Activated B cell treated with CpG ODN at 0.5 μM for 24 hours (primary cell): ENCODE measurements at regions of chr10 and their contacts with region 1.

Region 1: GRCh38 chr10:123132576-123133477 is 2.9 kb upstream of the HMX3 start:
- DNase-seq: peak; percentile 65
- ATAC-seq: peak; percentile 76
- H3K4me3 Mint-ChIP-seq: peak overlapping the region; percentile 66
- H3K27ac Mint-ChIP-seq: peak overlapping the region; percentile 71
- H3K4me1 Mint-ChIP-seq: peaks cover 34% of the 10 kb centered on the region
- H3K27me3 Mint-ChIP-seq: peaks cover 69% of the 10 kb centered on the region
- CTCF ChIP-seq: peak; percentile 26

Region 2: DNA sequence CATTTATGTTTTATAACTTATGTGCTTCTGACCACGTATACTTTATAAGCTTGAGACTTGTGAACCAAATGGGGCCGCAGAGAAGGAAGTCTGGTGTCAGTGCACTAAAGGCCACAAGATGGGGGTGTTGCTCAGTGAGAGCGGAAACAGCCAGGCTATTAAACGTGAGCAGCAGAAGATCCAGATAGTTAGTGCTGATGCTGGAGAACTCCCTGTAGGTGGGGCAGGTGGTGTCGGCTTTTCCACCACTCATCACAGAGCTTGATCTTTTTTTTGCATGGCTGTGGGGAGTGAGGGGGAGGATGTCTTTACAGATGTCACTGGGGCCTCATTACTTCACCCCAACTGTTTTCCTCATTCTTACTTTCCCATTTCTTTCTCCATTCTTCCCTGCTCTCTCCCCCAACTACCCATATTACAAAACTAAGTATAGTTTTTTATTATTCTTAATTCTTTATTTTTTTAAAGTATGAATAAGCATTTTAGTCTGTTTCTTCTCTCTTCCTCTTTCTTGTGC is 89.4 kb before region 1 on chr10:
- CTCF ChIA-PET with region 1: interaction called, 3 read pairs
- POLR2A ChIA-PET with region 1: no interaction called
- intact Hi-C with region 1: loop called (anchors 1 kb)
- DNase-seq: peak; percentile 16
- ATAC-seq: peak; percentile 69
- H3K4me3 Mint-ChIP-seq: no peak overlapping the region
- H3K27ac Mint-ChIP-seq: no peak overlapping the region
- H3K4me1 Mint-ChIP-seq: no peaks in the 10 kb centered on the region
- H3K27me3 Mint-ChIP-seq: no peaks in the 10 kb centered on the region
- CTCF ChIP-seq: no peak

Region 3: GRCh38 chr10:123147635-123148413 is 15.0 kb after region 1 on chr10 and contains the start of gene HMX2:
- CTCF ChIA-PET with region 1: interaction called, 13 read pairs
- POLR2A ChIA-PET with region 1: interaction called, 4 read pairs
- intact Hi-C with region 1: loop called (anchors 1 kb)
- DNase-seq: peak; percentile 24
- ATAC-seq: peak; percentile 11
- H3K4me3 Mint-ChIP-seq: peak within 1 kb of the TSS; percentile 69
- H3K27ac Mint-ChIP-seq: peak within 1 kb of the TSS; percentile 47
- H3K4me1 Mint-ChIP-seq: peaks cover 52% of the 10 kb centered on the region
- H3K27me3 Mint-ChIP-seq: peaks cover 56% of the 10 kb centered on the region
- CTCF ChIP-seq: no peak
- total RNA-seq, gene HMX2: 0.13 TPM in 1 of 2 replicates, not detected in the other

Region 4: DNA sequence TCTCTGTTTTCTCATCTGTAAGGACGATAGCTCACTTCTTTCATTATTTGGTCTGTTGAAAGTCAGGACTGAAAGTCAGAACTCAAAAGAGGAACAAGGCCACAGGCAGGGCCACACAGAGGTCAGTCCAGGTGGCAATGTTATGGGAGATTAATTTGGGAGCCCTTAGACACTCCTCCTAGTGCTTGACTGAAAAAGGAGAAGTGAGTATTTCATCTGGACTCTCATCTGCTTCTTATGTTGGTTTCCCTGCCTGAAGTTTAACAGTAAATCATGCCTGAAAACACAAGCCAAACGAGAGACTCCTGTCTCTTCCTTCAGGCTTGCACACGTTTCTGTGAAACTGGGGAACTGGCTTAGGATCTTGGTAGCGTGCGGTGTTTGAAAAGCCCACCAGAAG is 269.8 kb after region 1 on chr10:
- CTCF ChIA-PET with region 1: no interaction called
- POLR2A ChIA-PET with region 1: no interaction called
- intact Hi-C with region 1: no loop called
- DNase-seq: no peak
- ATAC-seq: peak; percentile 92
- H3K4me3 Mint-ChIP-seq: peak overlapping the region; percentile 59
- H3K27ac Mint-ChIP-seq: peak overlapping the region; percentile 85
- H3K4me1 Mint-ChIP-seq: peaks cover 56% of the 10 kb centered on the region
- H3K27me3 Mint-ChIP-seq: no peaks in the 10 kb centered on the region
- CTCF ChIP-seq: no peak

Region 5: GRCh38 chr10:123502983-123503382 is 370.2 kb after region 1 on chr10:
- CTCF ChIA-PET with region 1: no interaction called
- POLR2A ChIA-PET with region 1: no interaction called
- intact Hi-C with region 1: loop called (anchors 2 kb)
- DNase-seq: no peak
- ATAC-seq: no peak
- H3K4me3 Mint-ChIP-seq: no peak overlapping the region
- H3K27ac Mint-ChIP-seq: no peak overlapping the region
- H3K4me1 Mint-ChIP-seq: peaks cover 9% of the 10 kb centered on the region
- H3K27me3 Mint-ChIP-seq: no peaks in the 10 kb centered on the region
- CTCF ChIP-seq: no peak

Region 6: DNA sequence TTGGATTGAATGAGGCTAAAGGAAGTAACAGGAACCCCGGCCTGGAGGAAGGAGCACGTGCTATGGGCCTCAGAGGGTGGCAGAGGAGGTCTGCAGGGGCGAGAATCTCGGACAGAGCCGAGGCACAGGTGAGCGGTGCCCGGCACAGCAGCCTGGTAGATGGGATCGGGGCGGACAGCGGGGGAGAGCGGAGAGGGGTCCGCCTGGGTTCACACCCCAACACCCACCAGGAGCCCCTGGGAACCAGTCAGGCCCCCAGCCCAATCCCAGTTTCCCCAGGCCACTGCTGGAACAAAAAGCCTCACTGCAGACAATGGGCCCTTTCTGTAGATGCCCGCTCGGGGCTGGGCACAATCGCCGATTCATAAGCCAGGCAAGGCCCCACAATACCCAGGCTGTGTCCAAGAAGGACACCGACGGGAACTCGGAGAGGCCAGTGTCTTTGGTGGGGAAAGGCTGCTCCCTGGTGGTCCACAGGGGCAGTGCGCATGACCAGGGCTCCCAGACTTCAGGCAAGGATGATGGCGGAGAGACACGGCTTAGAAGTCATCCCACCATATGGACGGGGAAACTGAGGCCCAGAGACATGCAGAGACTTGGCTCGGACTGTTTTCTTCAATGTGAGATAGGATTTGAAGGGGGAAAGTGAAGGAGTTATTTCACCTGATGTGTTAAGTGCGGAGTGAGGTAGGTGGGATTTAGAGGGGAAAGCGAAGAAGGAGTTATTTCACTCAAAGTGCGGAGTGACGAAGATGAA is 426.4 kb after region 1 on chr10:
- CTCF ChIA-PET with region 1: interaction called, 8 read pairs
- POLR2A ChIA-PET with region 1: no interaction called
- intact Hi-C with region 1: loop called (anchors 1 kb)
- DNase-seq: peak; percentile 66
- ATAC-seq: peak; percentile 58
- H3K4me3 Mint-ChIP-seq: no peak overlapping the region
- H3K27ac Mint-ChIP-seq: no peak overlapping the region
- H3K4me1 Mint-ChIP-seq: no peaks in the 10 kb centered on the region
- H3K27me3 Mint-ChIP-seq: peaks cover 9% of the 10 kb centered on the region
- CTCF ChIP-seq: peak; percentile 98

Region 7: GRCh38 chr10:123967396-123968243 is 834.8 kb after region 1 on chr10:
- CTCF ChIA-PET with region 1: no interaction called
- POLR2A ChIA-PET with region 1: no interaction called
- intact Hi-C with region 1: loop called (anchors 2 kb)
- DNase-seq: no peak
- ATAC-seq: no peak
- H3K4me3 Mint-ChIP-seq: no peak overlapping the region
- H3K27ac Mint-ChIP-seq: no peak overlapping the region
- H3K4me1 Mint-ChIP-seq: peaks cover 4% of the 10 kb centered on the region
- H3K27me3 Mint-ChIP-seq: peaks cover 60% of the 10 kb centered on the region
- CTCF ChIP-seq: no peak

Region 8: GRCh38 chr10:124086787-124087671 is 954.2 kb after region 1 on chr10:
- CTCF ChIA-PET with region 1: no interaction called
- POLR2A ChIA-PET with region 1: no interaction called
- intact Hi-C with region 1: no loop called
- DNase-seq: no peak
- ATAC-seq: no peak
- H3K4me3 Mint-ChIP-seq: no peak overlapping the region
- H3K27ac Mint-ChIP-seq: no peak overlapping the region
- H3K4me1 Mint-ChIP-seq: peaks cover 66% of the 10 kb centered on the region
- H3K27me3 Mint-ChIP-seq: no peaks in the 10 kb centered on the region
- CTCF ChIP-seq: no peak